Activated T-helper 1 cell treated with anti-CD3 and anti-CD28 coated beads, Interleukin-12 subunit alpha, Interleukin-12 subunit beta, Interleukin-2, Interleukin-4 antibody, amounts not matched to agents 30 ng/mL and 10 ng/mL and 1 ng/mL, durations not matched to agents 14 hours and 24 hours and 36 hours (primary cell): ENCODE measurements at regions of chr2 and their contacts with region 1.

Region 1: DNA sequence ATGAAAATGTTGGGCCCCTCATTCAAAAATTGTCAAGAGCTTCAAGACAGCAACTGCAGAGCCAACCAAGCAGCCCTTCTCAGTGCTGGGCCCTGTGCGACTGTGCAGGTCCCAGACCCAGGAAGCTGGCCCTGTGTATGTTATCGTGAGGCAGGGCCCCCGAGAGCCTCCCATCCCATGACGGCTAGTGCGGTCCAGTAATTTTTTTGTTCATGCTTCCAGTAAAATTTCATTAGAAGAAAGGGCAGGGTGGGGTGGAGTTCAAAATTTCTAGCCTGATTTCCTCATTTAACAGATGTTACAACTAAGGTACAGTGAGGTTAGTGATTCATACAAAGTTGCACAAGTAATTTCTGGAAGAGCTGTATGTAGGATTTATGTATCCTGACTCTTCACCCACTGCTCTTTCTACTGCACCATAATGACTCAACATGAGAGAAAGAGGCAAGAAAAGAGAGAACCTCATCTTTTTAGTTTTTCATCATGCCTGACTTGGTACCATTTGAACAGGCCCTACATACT is 105.5 kb downstream of the ZEB2 start:
- DNase-seq: no peak
- H3K4me3 Mint-ChIP-seq: no peak overlapping the region
- H3K27ac Mint-ChIP-seq: peak overlapping the region; percentile 55
- H3K4me1 Mint-ChIP-seq: peaks cover 29% of the 10 kb centered on the region
- H3K27me3 Mint-ChIP-seq: no peaks in the 10 kb centered on the region

Region 2: DNA sequence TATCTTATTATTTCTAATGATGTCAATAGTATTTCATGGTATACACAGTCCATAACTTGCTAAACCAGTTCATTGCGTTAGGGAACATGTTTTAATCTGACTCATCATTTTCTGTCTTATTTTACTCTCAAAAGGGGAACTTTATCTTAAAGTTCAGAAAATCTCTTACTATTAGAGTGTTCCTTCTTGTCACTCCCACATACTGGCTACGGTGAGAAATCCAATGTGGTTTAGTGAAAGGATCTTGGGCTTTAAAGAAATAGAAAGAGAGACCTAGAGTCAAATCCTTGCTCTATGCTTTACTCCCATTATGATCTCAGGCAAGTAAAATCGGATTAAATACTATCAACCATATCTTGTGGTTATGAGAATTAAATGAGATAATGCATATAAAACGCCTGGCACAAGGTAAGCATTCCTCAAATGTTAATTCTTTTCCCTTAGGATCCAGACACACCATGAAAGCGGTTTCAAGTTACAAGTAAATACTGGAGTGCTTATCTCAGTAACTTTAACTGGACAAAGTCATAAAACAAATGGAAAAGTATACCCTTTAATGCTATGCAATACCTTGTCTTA is 709.2 kb before region 1 on chr2:
- intact Hi-C with region 1: loop called (anchors 1 kb)
- DNase-seq: no peak
- H3K4me3 Mint-ChIP-seq: no peak overlapping the region
- H3K27ac Mint-ChIP-seq: peak overlapping the region; percentile 59
- H3K4me1 Mint-ChIP-seq: peaks cover 29% of the 10 kb centered on the region
- H3K27me3 Mint-ChIP-seq: no peaks in the 10 kb centered on the region

Region 3: GRCh38 chr2:144332356-144333142 is 81.8 kb before region 1 on chr2:
- intact Hi-C with region 1: loop called (anchors 1 kb)
- DNase-seq: peak; percentile 91
- H3K4me3 Mint-ChIP-seq: peak overlapping the region; percentile 85
- H3K27ac Mint-ChIP-seq: peak overlapping the region; percentile 98
- H3K4me1 Mint-ChIP-seq: peaks cover 48% of the 10 kb centered on the region
- H3K27me3 Mint-ChIP-seq: no peaks in the 10 kb centered on the region

Region 4: DNA sequence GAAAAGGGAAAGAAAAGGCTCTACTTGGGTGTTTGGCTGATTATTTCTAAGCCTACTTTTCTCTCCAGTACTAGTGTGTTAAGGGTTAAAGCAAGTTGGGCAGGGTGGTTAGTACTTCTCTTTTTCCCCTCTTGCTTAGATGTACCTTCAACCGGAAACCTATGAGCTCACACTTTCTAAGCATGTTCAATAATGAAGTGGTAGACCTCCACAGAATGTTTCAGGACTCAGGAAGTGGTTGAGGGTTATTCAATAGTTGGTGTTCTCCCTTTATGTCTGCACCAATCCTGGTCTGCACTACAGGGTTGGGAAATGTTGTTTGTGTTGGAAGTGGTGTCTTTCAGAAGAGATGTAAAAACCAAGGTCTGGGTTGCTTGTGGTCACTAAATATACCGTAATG is 31.5 kb before region 1 on chr2:
- intact Hi-C with region 1: loop called (anchors 2 kb)
- DNase-seq: peak; percentile 13
- H3K4me3 Mint-ChIP-seq: no peak overlapping the region
- H3K27ac Mint-ChIP-seq: peak overlapping the region; percentile 32
- H3K4me1 Mint-ChIP-seq: peaks cover 44% of the 10 kb centered on the region
- H3K27me3 Mint-ChIP-seq: peaks cover 8% of the 10 kb centered on the region

Region 5: GRCh38 chr2:144456680-144457079 is 42.3 kb after region 1 on chr2:
- intact Hi-C with region 1: loop called (anchors 1 kb)
- DNase-seq: no peak
- H3K4me3 Mint-ChIP-seq: no peak overlapping the region
- H3K27ac Mint-ChIP-seq: no peak overlapping the region
- H3K4me1 Mint-ChIP-seq: peaks cover 78% of the 10 kb centered on the region
- H3K27me3 Mint-ChIP-seq: peaks cover 13% of the 10 kb centered on the region

Region 6: GRCh38 chr2:144541396-144541795 is 127.0 kb after region 1 on chr2:
- intact Hi-C with region 1: no loop called
- DNase-seq: no peak
- H3K4me3 Mint-ChIP-seq: no peak overlapping the region
- H3K27ac Mint-ChIP-seq: no peak overlapping the region
- H3K4me1 Mint-ChIP-seq: no peaks in the 10 kb centered on the region
- H3K27me3 Mint-ChIP-seq: peaks cover 11% of the 10 kb centered on the region